Heart right ventricle (tissue), 16 donors: ENCODE measurements at regions of chr15 and their contacts with region 1.

Region 1: GRCh38 chr15:81106560-81106959 is 27.5 kb upstream of the CFAP161 start:
- DNase-seq: peak in 1 of 2 donors; percentile 47
- ATAC-seq: peak; percentile 57 to 87 (median 70)
- H3K4me3 ChIP-seq: no peak overlapping the region
- H3K27ac ChIP-seq: no peak overlapping the region
- H3K4me1 ChIP-seq: peaks cover 0 to 21% (median 2%) of the 10 kb centered on the region in 9 donors
- H3K27me3 ChIP-seq: no peaks in the 10 kb centered on the region
- CTCF ChIP-seq: peak; percentile 51 to 88 (median 78)

Region 2: DNA sequence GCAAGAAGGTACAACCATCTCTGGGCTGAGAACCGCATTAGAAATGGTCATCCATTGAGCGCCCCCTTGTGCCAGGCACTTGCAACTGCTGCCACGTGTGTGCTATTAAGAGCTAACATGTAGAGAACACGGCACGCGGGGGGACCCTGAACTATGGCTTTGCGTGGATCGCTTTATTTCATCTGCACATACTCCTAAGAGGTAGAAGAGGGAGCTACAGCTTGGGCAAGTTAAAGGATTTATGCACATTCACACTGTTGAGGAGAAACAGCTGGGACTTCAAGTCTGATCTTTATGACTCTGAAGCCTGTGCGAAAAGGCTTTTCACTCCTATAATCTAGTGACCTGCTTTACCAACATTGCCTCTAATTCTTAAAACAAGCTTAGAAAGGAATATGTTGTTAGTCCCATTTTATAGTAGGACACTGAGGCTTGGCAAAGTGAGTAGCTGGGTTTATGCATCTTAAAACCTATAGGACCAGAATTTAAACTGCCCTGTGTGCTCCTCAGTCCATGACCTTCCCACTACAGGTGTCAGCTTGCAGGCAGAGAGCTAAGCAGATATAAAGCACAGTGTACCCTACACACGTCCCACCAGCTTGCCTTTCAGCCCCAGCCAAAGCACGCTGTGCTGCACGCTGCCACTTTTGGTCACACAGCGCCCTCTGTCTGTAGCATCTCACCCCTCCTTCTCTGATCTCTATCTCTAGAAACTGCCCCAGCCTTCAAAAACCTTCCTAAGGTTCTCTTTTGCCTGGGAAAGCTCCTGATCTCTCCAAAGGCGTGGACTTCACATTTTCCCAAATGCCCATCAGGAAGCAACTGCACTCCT is 159.6 kb after region 1 on chr15:
- intact Hi-C with region 1: loop called (anchors 1 to 5 kb)
- DNase-seq: peak; percentile 80 to 81
- ATAC-seq: peak; percentile 87 to 96 (median 94)
- H3K4me3 ChIP-seq: peak overlapping the region in 2 of 10 donors; percentile 27 to 29
- H3K27ac ChIP-seq: no peak overlapping the region
- H3K4me1 ChIP-seq: peaks cover 0 to 30% (median 15%) of the 10 kb centered on the region in 9 donors
- H3K27me3 ChIP-seq: peaks cover 0 to 6% (median 0%) of the 10 kb centered on the region in 7 donors
- CTCF ChIP-seq: peak; percentile 81 to 93 (median 86)